ENCODE measurements at regions of chr7 and their contacts with region 1.

Region 1: DNA sequence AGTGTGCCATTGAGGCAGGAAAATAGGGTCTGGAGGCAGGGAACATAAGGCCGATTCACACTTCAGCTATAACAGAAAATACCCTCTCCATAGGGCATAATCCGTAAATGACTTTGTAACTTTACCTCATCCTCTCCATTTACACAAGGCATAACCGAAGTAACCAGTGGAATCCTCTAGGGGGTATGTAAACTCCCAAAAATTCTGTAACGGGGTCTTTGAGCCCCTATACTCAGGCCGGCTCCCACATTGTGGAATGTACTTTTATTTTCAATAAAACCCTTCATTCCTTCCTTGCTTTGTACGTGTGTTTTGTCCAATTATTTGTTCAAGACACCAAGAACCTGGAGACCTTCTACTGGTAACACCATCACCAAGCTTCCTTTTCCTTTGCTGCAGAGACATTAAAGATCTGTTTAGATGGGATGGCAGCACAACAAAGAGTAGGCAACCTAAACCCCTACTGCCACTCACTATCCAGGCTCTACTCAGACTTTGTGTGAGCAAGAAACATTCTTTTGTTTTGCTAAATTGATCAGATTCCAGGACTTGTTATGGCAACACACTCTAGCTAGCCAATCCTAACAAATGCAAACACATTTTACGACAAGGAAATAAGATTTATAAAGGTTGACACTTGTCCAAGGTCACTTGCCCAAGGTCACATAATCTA is 99.3 kb downstream of the DGKI start:
- DNase-seq: no peak
- CTCF ChIP-seq: no peak

Region 2: GRCh38 chr7:137731436-137731835 is 16.1 kb before region 1 on chr7:
- CTCF ChIA-PET with region 1: interaction called, 15 read pairs
- POLR2A ChIA-PET with region 1: no interaction called
- DNase-seq: no peak
- CTCF ChIP-seq: no peak

Region 3: GRCh38 chr7:137762334-137762733 is 14.8 kb after region 1 on chr7:
- CTCF ChIA-PET with region 1: interaction called, 10 read pairs
- POLR2A ChIA-PET with region 1: no interaction called
- DNase-seq: no peak
- CTCF ChIP-seq: no peak

Measured in GM10248 (cell line).